ENCODE measurements at regions of chr5 and their contacts with region 1.

Region 1: DNA sequence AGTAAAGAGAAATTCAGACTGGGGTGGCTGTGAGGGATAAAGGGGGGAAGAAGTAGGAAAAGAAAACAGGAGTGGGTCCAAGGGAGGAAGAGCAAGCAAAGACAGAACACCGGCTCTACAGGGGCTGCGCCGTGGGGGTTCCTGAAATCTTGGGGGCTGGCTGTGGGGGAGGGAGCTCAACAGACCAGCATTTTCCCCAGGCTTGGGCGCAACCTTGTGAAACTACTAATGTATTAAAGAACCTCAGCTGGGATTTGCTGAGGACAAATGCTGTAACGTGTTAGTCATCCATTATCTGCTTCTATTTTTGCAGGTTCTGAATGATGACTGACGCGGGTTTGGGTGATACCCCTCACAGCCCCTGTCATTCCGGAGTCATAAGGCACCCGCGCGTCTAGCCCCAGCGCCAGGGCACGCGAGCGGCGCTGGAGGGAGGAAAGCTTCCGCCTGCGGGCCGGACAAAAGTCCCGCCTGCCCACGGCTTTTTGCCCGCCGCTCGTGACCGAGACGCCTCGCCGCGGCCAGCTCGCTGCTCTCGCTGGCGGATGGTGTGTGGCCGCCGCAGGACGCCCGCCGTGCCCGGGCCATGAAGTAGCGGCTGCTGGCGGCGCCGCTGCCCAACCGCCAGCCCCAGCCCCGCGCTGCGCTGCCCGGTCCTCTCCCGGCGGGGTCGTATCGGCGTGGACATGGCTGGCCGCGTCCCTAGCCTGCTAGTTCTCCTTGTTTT is 110.6 kb downstream of the PAM start:
- DNase-seq: peak; percentile 58
- H3K4me3 Mint-ChIP-seq: peak overlapping the region; percentile 69
- H3K27ac Mint-ChIP-seq: peak overlapping the region; percentile 73
- H3K4me1 Mint-ChIP-seq: peaks cover 9% of the 10 kb centered on the region
- H3K27me3 Mint-ChIP-seq: no peaks in the 10 kb centered on the region
- CTCF ChIP-seq: no peak

Region 2: DNA sequence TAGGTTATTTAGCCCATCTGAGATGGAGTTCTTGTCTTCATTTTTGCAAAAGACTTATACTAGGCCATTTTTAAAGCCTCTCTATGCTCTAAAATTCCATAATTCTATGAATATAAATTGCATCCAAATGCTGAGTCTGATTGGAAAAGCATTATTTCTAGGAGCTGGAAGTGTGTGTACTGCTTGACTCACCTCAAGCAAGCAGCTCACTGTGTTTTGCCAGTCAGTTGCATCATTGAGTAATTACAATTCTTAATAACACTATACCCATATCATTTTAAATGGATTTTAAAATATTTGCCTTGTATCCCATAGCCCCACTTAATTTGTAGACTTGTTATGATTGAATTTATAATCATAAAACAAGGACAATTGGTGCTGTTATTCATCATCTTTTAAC is 50.4 kb after region 1 on chr5:
- CTCF ChIA-PET with region 1: interaction called, 3 read pairs
- intact Hi-C with region 1: loop called (anchors 5 kb)
- DNase-seq: no peak
- H3K4me3 Mint-ChIP-seq: no peak overlapping the region
- H3K27ac Mint-ChIP-seq: no peak overlapping the region
- H3K4me1 Mint-ChIP-seq: peaks cover 19% of the 10 kb centered on the region
- H3K27me3 Mint-ChIP-seq: no peaks in the 10 kb centered on the region
- CTCF ChIP-seq: no peak

Region 3: GRCh38 chr5:103211576-103212561 is 346.2 kb after region 1 on chr5:
- CTCF ChIA-PET with region 1: no interaction called
- intact Hi-C with region 1: loop called (anchors 10 kb)
- DNase-seq: no peak
- H3K4me3 Mint-ChIP-seq: no peak overlapping the region
- H3K27ac Mint-ChIP-seq: no peak overlapping the region
- H3K4me1 Mint-ChIP-seq: no peaks in the 10 kb centered on the region
- H3K27me3 Mint-ChIP-seq: no peaks in the 10 kb centered on the region
- CTCF ChIP-seq: no peak